Astrocyte of the cerebellum (primary cell): ENCODE measurements at regions of chr1 and their contacts with region 1.

Region 1: DNA sequence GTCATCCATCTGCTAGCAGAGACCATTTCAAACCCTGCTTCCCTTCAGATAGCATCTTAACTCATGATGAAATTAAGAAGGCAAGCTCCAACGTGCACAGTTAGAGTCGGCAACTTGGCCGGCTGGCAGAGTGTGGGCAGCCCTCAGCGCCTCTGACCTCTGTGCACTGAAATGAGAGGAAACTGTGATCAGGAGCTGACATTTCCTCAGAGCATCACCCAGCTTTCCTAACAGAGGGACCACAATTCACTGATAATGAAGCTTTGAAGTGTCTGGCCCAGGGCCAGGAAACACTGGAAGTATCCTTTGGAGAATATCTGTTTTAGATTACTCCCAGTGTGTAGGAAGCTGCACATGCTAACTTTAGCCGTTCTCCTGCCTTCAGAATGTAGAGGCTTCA is 145.0 kb upstream of the ZC3H11B start:
- DNase-seq: no peak
- H3K4me3 ChIP-seq: no peak overlapping the region
- CTCF ChIP-seq: no peak

Region 2: DNA sequence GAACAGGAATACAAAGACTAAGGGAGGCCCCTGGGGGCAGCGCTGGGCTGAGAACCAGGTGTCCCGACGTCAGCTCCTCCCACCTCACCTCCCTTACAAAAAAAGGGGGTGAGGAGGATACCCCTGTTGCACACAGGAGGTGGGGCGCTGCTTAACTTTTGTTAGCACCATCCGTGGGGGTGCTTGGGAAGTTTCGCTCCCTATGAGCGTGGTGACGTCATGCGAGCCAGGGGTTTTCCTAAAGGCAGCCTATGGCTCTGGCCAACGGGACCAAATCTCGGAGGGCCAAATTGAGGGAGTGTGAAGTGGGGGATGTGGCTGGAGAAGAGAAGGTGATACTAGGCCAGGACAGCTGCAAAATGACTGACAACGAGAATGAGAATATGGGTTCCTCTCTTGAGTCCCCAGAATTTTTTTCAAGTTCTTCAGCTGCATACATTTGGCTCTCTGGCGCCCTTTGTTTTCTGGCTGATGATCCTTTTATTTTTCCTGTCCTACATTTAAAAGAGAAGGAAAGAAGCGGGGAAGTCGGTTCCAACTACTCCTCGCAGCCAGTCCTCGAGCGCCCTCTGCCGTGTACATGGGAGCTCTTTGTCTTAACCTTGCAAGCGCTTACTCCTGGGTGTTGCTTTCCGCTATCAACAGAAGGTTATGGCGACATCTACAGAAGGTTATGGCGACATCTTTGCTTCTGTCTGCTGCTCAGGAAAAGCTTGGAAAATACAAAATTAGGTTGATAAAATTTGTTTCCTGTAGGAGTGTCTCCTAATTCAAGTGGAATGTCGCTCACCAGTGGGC is 97.0 kb before region 1 on chr1:
- in situ Hi-C with region 1: loop called (anchors 5 kb)
- DNase-seq: peak; percentile 89
- H3K4me3 ChIP-seq: no peak overlapping the region
- CTCF ChIP-seq: peak; percentile 92

Region 3: DNA sequence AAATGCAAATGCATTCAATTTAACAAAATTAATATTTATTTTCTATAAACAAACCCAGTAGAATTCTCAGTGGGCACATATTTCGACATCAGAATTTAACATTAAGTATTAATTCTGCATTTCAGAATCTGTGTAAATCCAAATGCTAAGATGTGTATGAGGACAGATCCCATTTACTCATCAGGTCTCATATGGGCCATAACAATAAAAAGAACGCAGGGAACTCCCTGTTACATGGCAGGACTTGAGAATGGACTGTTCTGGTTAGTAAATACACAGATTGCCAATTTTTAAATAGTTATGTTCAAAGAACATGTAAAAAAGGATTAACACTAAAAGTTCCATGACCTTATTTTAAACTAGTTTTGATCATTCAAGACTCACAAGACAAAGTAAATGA is 66.4 kb after region 1 on chr1:
- in situ Hi-C with region 1: no loop called
- DNase-seq: no peak
- H3K4me3 ChIP-seq: no peak overlapping the region
- CTCF ChIP-seq: no peak